ENCODE measurements at regions of chr13 and their contacts with region 1.

Region 1: DNA sequence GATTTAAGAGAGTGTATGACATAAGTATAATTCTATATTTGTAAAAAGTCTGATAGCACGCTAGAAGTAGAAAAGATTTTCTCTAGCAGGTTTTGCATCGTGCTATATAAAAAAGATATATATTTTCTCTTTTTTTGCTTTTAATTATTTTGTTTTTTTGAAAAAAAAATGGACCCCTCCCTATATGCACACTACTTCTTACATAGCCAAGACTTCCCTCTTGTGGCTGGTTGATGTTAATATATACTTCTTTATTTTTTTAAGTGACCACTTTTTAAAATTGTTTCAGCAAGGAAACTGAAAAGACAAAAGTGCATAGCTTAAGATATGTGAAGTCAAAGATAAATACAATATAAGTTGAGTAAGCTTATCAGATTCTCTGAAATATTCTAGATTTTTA is 1202.8 kb downstream of the DIAPH3 start:
- DNase-seq: no peak
- ATAC-seq: no peak

Region 2: GRCh38 chr13:57925250-57925649 is 1035.6 kb before region 1 on chr13:
- intact Hi-C with region 1: loop called in 1 of 2 experiments (anchors 10 kb)
- DNase-seq: no peak
- ATAC-seq: no peak

Region 3: DNA sequence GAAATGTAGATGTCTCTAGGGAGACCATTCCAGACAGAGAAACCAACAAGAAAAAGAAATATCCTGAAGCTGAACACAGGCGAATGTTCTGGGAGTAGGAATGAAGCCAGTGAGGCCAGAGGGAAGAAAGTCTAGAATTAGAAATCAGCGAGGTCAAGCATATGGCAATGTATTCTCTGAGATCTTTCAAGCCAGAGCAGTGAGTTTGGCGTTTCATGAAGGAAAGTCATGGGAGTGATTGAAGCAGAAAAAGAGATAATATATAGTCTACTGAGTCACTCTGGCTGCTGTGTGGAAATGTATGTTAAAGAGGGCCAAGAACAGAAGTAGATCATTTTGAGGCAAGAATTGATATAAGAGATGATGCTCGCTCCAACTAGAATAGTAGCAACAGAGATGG is 753.4 kb before region 1 on chr13:
- intact Hi-C with region 1: no loop called
- DNase-seq: no peak
- ATAC-seq: no peak

Region 4: DNA sequence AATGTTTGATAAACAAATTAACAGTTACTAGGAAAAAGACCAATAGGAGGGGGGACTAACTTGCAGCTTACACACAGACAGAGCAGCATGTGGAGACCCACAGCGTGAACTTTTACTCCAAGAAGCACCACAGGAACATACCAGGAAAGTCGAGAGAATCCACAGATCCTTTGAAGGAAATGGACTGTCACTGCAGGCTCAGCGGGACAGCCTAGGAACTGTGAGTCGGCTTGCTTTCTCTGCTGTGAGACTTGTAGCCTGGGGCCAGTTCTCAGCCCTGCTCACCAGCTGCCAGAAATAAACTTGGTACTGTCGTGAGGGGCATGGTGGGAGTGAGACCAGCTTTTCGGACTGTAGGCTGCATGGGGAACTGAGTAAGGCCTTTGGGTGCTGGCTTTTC is 117.8 kb before region 1 on chr13:
- intact Hi-C with region 1: no loop called
- DNase-seq: no peak
- ATAC-seq: no peak

Region 5: GRCh38 chr13:58978331-58978730 is 17.4 kb after region 1 on chr13:
- intact Hi-C with region 1: no loop called
- DNase-seq: no peak
- ATAC-seq: no peak

Region 6: DNA sequence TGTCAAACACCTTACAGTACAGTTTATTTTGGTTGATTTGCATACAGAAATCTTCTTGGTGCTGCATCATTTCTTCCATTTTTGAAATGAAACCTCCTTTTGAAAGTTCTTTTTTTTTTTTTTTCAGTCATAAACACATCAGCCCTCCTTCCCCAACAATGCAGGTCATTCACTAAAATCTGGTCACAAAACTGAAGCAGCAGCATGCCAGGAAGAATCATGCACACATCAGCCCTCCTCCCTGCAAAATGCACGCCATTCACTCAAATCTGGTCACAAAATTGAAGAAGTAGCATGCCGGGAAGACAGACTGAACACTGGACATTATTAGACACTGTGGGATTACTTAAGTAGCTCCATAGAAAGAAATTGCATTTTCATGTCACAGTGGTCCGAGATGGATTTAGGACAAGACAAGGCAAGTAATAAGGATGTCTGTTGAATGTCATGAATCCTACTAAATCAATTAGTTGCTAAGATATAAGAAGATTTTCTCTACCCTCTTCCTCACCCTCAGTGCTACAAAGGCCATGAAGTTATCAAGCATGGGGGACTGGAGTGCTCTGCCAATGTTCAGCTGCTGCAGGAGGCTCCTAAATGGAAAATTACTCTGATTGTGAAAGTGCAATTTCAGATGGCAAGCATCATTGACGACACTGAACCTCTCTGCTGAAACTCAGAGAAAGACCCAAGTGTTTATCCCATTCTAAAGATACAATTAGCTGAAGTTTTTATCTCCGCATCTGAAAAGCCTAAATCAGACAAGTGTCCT is 289.6 kb after region 1 on chr13:
- intact Hi-C with region 1: no loop called
- DNase-seq: no peak
- ATAC-seq: no peak